AG04450 (cell line): ENCODE measurements at regions of chr18 and their contacts with region 1.

Region 1: GRCh38 chr18:13823707-13824395 is at the start of gene MC5R:
- DNase-seq: no peak
- H3K4me3 ChIP-seq: peak within 1 kb of the TSS; percentile 41
- H3K27ac ChIP-seq: no peak within 1 kb of the TSS
- H3K27me3 ChIP-seq: no peaks in the 10 kb centered on the region
- CTCF ChIP-seq: peak; percentile 73
- polyA plus RNA-seq, gene MC5R: not detected in 2 replicates

Region 2: DNA sequence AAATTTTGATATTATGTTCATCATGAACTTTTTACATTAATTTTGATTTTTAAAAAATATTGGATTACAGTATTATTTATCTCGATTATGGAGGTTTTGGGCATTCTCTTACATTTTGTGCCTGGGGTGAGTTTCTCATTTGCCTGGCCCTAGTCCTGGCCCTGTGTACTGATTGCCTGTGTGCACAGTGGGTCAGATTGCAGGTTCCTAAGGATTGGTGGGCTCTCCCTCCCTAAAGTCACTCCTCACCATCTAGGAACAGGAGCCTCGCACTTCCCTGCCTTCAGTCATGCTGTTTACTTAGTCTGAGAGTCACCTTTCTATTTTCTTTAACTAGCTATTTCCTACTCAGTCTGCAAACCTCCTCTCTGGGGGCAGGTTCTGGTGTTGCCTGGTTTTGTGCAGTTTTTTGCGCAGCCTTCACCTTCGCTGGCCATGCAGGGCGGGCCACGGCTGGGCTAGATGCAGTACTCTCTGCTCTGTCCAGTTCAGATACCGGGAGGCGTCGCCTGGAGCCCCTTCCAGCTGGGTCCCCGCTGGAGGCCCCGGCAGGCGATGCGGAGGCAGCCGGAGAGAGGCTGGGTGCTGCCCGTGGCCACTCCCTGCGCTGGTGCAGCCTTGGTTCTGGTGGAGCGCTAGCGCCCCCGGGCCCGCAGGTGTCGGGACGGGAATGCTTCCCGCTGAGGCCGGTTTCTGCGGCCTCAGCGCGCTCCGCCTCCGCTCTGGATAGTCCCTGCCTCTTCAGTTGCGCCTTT is 23.2 kb before region 1 on chr18:
- CTCF ChIA-PET with region 1: no interaction called
- POLR2A ChIA-PET with region 1: no interaction called
- DNase-seq: no peak
- H3K4me3 ChIP-seq: no peak overlapping the region
- H3K27ac ChIP-seq: no peak overlapping the region
- H3K27me3 ChIP-seq: no peaks in the 10 kb centered on the region
- CTCF ChIP-seq: peak; percentile 27

Region 3: GRCh38 chr18:13813271-13813849 is 10.5 kb before region 1 on chr18:
- CTCF ChIA-PET with region 1: interaction called, 22 read pairs
- POLR2A ChIA-PET with region 1: no interaction called
- DNase-seq: no peak
- H3K4me3 ChIP-seq: no peak overlapping the region
- H3K27ac ChIP-seq: no peak overlapping the region
- H3K27me3 ChIP-seq: no peaks in the 10 kb centered on the region
- CTCF ChIP-seq: peak; percentile 86